Heart left ventricle (tissue), 16 donors: ENCODE measurements at regions of chr18 and their contacts with region 1.

Region 1: DNA sequence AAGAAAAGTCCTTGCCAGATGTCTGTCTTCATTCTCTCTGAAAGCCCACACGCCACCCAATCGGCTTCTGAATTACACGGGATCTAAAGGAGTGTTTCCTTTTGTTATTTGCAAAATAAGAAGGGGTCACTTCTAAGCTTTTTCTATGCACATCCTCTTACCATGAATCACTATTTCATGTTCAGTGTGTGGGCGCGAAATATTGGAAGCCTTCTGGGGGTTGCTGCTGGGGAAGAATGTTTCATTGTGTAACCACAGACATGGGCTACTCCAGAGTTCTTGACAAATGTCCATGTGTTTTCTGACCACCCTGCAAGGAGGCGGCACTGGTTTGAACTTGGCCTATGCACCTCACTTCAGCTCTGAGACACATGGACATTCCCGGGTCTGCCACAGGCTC is 133.6 kb upstream of the APCDD1 start:
- DNase-seq: no peak
- ATAC-seq: peak in 3 of 4 donors; percentile 24 to 79 (median 63)
- H3K4me3 ChIP-seq: no peak overlapping the region
- H3K27ac ChIP-seq: no peak overlapping the region
- H3K4me1 ChIP-seq: peaks cover 0 to 14% (median 0%) of the 10 kb centered on the region in 12 donors
- H3K27me3 ChIP-seq: no peaks in the 10 kb centered on the region
- CTCF ChIP-seq: no peak
- POLR2A ChIP-seq: no peak

Region 2: DNA sequence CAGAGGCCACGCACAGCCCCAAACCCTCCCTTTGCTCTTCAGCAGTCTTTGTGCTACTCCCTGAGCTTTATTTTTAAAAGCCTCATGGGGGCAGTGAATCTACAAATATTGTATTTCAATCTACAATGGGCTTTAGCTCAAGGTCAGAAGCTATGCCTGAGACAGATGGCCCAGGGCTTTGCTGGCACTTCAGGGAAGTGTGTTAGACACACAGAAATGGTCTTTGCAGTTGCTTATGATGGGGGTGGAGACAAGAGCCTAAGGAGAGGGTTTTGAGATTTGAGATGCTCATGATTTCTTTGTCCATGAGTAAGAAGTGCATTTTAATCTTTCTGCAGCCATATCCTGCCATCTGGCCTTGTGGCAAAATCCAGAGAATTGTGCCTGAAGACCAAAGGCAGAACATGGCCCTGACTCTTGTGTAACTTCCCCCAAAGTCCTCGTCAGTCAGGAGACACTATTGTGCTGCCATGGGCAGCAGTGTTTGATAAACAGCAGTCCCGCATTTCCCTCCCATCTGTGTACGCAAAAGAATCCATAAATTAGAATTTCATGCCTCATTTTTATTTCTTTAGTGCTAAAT is 314.4 kb before region 1 on chr18:
- intact Hi-C with region 1: no loop called
- DNase-seq: no peak
- ATAC-seq: peak in 3 of 4 donors; percentile 29 to 41 (median 39)
- H3K4me3 ChIP-seq: no peak overlapping the region
- H3K27ac ChIP-seq: no peak overlapping the region
- H3K4me1 ChIP-seq: peaks cover 0 to 30% (median 18%) of the 10 kb centered on the region in 12 donors
- H3K27me3 ChIP-seq: no peaks in the 10 kb centered on the region
- CTCF ChIP-seq: peak in 8 of 12 donors; percentile 10 to 47 (median 36)
- POLR2A ChIP-seq: no peak

Region 3: DNA sequence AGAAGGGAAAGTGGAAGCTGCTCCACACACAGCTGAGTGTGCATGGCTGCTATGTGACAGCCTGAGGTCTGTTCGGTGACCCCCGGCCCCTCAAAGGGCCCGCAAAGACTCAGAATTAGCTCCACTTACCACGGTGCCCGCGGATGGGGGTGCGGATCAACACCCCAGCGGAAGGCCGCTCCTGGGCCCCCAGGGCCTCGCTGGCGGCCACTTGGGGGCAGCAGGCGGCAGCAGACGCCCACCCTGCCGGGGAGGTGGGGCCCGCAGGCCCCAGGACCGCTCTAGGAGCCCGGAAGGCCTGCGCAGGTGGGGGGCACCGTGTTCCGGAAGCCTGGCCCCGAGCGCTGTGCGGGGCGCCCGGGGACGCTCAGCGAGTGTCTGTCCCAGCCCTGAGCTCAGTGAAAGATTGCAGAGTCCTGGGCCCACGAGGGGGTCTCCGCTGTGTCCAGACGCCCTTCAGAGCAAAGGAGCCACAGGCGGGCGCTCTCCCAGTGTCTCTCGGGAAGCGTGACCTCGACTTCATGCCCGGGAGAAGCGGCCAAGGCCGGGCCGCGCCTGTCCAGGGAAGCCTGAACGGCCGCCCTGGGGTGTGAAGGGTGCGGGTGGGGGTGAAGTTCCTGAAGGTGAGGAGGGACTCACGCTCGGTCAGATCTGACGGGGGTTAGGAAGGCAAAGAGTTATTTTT is 288.3 kb before region 1 on chr18:
- intact Hi-C with region 1: loop called in 1 of 10 experiments (anchors 10 kb)
- DNase-seq: peak in 1 of 5 donors; percentile 49
- ATAC-seq: peak; percentile 28 to 81 (median 78)
- H3K4me3 ChIP-seq: peak overlapping the region in 10 of 12 donors; percentile 0 to 51 (median 38)
- H3K27ac ChIP-seq: peak overlapping the region in 7 of 12 donors; percentile 2 to 70 (median 37)
- H3K4me1 ChIP-seq: peaks cover 0 to 30% (median 10%) of the 10 kb centered on the region in 12 donors
- H3K27me3 ChIP-seq: no peaks in the 10 kb centered on the region
- CTCF ChIP-seq: peak; percentile 39 to 69 (median 54)
- POLR2A ChIP-seq: no peak